ENCODE measurements at regions of chr1 and their contacts with region 1.

Region 1: GRCh38 chr1:93447516-93448291 is at the start of gene FNBP1L:
- DNase-seq: peak; percentile 64

Region 2: GRCh38 chr1:93615582-93616150 is 168.0 kb after region 1 on chr1:
- in situ Hi-C with region 1: loop called (anchors 25 kb)
- DNase-seq: no peak

Region 3: GRCh38 chr1:93846211-93846991 is 398.7 kb after region 1 on chr1:
- in situ Hi-C with region 1: loop called (anchors 25 kb)
- DNase-seq: peak; percentile 88

Measured in KBM-7 (cell line).